ENCODE measurements at regions of chr6 and their contacts with region 1.

Region 1: GRCh38 chr6:159789377-159790148 is at the start of gene TCP1:
- DNase-seq: peak; percentile 100
- ATAC-seq: peak; percentile 90 to 94
- H3K4me3 ChIP-seq: peak within 1 kb of the TSS; percentile 94 to 99 (median 94)
- H3K27ac ChIP-seq: peak within 1 kb of the TSS; percentile 94 to 100 (median 96)
- H3K4me1 ChIP-seq: peaks cover 38 to 41% of the 10 kb centered on the region in 2 donors
- H3K27me3 ChIP-seq: no peaks in the 10 kb centered on the region
- CTCF ChIP-seq: no peak
- POLR2A ChIP-seq: peak; percentile 95 to 99
- total RNA-seq, gene TCP1: 135 to 256 (median 166) TPM

Region 2: DNA sequence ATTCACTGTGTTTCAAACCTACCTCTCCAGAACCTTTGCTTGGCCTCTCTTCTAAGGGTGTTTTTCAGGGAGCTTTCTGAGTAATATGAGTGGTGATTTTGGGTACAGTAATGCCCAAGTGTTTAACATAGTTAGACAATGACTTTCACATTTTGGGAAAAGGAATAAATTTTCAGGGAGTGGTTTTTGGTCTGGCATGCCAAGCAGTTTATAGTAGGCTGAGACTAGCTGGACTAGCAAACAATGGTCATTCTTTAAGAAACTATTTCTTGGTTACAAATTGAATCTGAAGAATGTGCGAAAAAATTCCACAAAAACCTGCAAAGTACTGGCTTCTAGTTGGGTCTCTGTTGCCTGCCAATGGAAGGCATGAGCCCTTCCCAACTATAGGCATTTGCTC is 605.0 kb before region 1 on chr6:
- in situ Hi-C with region 1: no loop called
- intact Hi-C with region 1: no loop called
- DNase-seq: no peak
- ATAC-seq: no peak
- H3K4me3 ChIP-seq: no peak overlapping the region
- H3K27ac ChIP-seq: no peak overlapping the region
- H3K4me1 ChIP-seq: no peaks in the 10 kb centered on the region
- H3K27me3 ChIP-seq: no peaks in the 10 kb centered on the region
- CTCF ChIP-seq: no peak
- POLR2A ChIP-seq: no peak

Region 3: DNA sequence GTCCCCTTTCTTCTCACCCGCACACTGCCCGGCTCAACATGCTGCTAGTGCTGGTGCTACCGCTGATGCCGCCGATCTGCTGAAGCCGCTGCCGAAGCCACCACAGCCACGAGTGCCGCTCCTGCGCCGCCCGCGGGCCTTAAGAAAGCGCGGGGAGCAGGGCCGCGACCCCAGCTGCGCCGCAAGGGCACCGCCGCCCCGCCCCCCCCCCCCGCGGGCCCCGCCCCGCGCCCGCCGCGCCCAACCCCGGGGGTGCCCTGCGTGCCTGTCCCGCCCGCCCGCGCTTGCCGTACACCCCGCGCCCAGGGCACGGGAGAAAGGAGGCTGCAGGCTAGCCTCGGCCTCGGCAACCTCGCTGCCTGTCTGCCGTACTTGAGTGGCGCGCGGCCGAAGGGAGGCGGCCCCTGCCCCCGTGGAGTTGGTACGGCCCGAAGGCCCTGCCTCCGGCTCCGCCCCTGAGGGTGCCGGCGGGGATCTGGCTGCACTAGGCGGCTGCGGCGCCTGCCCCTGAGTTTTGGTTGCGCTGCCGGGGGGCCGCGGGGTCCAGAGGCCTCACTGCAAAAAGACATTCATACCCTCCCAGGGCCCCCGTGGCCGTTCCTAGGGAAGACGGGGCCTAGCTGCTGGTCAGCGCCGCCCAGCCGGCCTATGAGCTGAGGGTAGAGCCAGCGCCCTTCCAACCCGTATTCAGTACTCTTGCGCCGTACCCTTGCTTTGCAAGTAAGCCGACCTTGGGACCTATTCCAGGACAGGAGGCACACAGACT is 96.3 kb before region 1 on chr6 and contains the start of gene SOD2:
- in situ Hi-C with region 1: loop called in 1 of 4 experiments (anchors 10 kb)
- intact Hi-C with region 1: loop called (anchors 1 kb)
- DNase-seq: peak; percentile 86 to 92
- ATAC-seq: peak; percentile 73 to 84
- H3K4me3 ChIP-seq: peak within 1 kb of the TSS; percentile 83 to 94 (median 90)
- H3K27ac ChIP-seq: peak within 1 kb of the TSS; percentile 94 to 99 (median 96)
- H3K4me1 ChIP-seq: peaks cover 38 to 41% of the 10 kb centered on the region in 2 donors
- H3K27me3 ChIP-seq: no peaks in the 10 kb centered on the region
- CTCF ChIP-seq: no peak
- POLR2A ChIP-seq: peak; percentile 88 to 95
- total RNA-seq, gene SOD2: 10,850 to 22,513 (median 13,452) TPM

Region 4: DNA sequence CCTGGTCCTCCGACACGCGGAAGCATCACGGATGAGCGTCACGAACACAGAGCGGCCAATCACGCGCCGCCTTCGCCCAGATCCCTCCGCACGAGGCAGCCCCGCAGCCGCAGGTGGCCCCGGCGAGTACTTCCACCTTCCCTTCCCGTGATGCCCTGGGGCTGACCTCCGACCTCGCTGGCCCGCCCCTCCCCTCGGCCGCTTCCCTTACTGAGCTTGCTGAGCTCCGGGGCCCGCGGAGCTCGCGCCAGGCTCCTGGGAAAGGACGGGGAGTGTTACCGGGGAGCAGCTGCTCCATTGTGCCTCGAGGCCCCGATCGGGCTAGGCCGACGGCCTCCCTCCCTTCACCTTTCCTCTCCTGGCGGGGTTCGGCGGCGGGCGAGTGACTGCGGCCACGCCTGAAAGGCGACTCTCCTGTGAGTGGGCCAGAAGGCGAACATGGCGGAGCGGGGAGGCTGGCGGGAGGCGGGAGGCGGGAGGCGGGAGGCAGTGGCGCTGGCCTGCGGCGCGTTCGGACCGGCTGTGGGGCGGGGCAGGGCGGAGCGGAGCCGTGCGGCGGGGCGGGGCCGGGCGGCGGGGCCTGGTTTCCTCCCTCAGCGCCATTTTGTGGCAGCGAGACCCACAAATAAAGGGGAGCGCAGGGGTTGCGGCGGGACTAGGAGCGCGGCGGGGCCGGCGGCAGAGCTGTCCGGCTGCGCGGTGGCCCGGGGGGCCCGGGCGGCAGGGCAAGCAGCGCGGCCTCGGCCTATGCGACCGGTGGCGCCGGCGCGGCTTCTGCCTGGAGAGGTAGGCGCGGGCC is 62.4 kb before region 1 on chr6 and contains the start of gene WTAP:
- in situ Hi-C with region 1: loop called in 1 of 4 experiments (anchors 5 kb)
- intact Hi-C with region 1: loop called (anchors 1 kb)
- DNase-seq: peak; percentile 97 to 98
- ATAC-seq: peak; percentile 82 to 88
- H3K4me3 ChIP-seq: peak within 1 kb of the TSS; percentile 86 to 99 (median 90)
- H3K27ac ChIP-seq: peak within 1 kb of the TSS; percentile 99 to 100 (median 99)
- H3K4me1 ChIP-seq: peaks cover 49 to 50% of the 10 kb centered on the region in 2 donors
- H3K27me3 ChIP-seq: no peaks in the 10 kb centered on the region
- CTCF ChIP-seq: peak in 1 of 5 experiments; percentile 40
- POLR2A ChIP-seq: peak; percentile 75 to 93
- total RNA-seq, gene WTAP: 147 to 238 (median 193) TPM

Region 5: GRCh38 chr6:159742165-159742564 is 47.4 kb before region 1 on chr6:
- in situ Hi-C with region 1: loop called in 1 of 4 experiments (anchors 5 kb)
- intact Hi-C with region 1: no loop called
- DNase-seq: no peak
- ATAC-seq: peak in 1 of 2 donors; percentile 36
- H3K4me3 ChIP-seq: no peak overlapping the region
- H3K27ac ChIP-seq: peak overlapping the region in 3 of 4 donors; percentile 7 to 42 (median 38)
- H3K4me1 ChIP-seq: peaks cover 0 to 13% of the 10 kb centered on the region in 2 donors
- H3K27me3 ChIP-seq: no peaks in the 10 kb centered on the region
- CTCF ChIP-seq: no peak
- POLR2A ChIP-seq: no peak

Region 6: DNA sequence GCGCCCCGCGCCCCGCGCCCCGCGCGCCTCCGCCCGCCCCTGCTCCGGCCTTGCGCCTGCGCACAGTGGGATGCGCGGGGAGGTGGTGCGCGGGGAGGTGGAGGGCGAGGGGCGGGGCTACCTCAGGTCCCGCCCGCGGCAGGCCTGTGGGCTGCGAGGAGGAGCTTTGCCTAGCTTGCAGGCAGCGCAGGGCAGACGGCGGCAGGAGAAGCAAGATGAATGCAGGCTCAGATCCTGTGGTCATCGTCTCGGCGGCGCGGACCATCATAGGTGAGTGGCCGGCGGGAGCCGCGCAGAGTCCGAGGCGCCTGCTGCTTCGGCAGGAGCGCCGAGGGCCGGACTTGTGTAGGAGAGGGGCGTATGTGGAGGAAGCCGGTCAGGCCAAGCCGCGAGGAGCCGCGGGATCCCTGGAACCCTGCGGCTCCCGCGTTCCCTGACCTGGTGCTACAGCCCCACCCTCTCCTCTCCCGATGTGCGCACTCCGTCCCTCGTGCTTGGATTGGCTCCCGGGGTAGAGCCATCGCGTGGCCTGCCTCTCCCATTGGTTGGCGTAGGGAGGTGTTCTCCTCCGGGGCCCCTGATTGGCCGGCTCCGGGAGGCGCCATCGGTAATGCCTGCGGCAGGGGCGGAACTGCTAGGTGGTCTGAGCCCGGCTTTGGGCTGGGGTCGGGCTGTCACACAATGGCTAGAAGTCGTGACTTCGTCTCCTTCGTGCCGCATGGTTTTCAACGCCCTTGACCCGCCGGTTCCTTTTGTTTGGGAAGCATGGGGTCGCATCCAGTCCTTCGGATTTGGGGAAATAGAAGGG is 27.5 kb before region 1 on chr6 and contains the start of gene ACAT2:
- in situ Hi-C with region 1: no loop called
- intact Hi-C with region 1: loop called (anchors 1 kb)
- DNase-seq: peak; percentile 95 to 96
- ATAC-seq: peak; percentile 98 to 99
- H3K4me3 ChIP-seq: peak within 1 kb of the TSS; percentile 84 to 90 (median 88)
- H3K27ac ChIP-seq: peak within 1 kb of the TSS; percentile 96 to 99 (median 96)
- H3K4me1 ChIP-seq: peaks cover 13 to 19% of the 10 kb centered on the region in 2 donors
- H3K27me3 ChIP-seq: no peaks in the 10 kb centered on the region
- CTCF ChIP-seq: peak in 2 of 5 experiments; percentile 8 to 40
- POLR2A ChIP-seq: peak; percentile 47 to 68
- total RNA-seq, gene ACAT2: 0.59 to 4.6 (median 2.4) TPM

Region 7: GRCh38 chr6:159968440-159969203 is 179.1 kb after region 1 on chr6 and contains the start of gene IGF2R:
- in situ Hi-C with region 1: no loop called
- intact Hi-C with region 1: loop called (anchors 5 kb)
- DNase-seq: peak; percentile 91 to 95
- ATAC-seq: peak; percentile 73 to 79
- H3K4me3 ChIP-seq: peak within 1 kb of the TSS; percentile 79 to 96 (median 90)
- H3K27ac ChIP-seq: peak within 1 kb of the TSS; percentile 95 to 98 (median 96)
- H3K4me1 ChIP-seq: peaks cover 42 to 43% of the 10 kb centered on the region in 2 donors
- H3K27me3 ChIP-seq: no peaks in the 10 kb centered on the region
- CTCF ChIP-seq: peak in 2 of 5 experiments; percentile 13 to 48
- POLR2A ChIP-seq: peak; percentile 94 to 95
- total RNA-seq, gene IGF2R: 56.6 to 134 (median 108) TPM

Region 8: GRCh38 chr6:160069050-160069454 is 279.5 kb after region 1 on chr6:
- in situ Hi-C with region 1: no loop called
- intact Hi-C with region 1: loop called (anchors 10 kb)
- DNase-seq: no peak
- ATAC-seq: no peak
- H3K4me3 ChIP-seq: no peak overlapping the region
- H3K27ac ChIP-seq: no peak overlapping the region
- H3K4me1 ChIP-seq: peaks cover 10 to 28% of the 10 kb centered on the region in 2 donors
- H3K27me3 ChIP-seq: no peaks in the 10 kb centered on the region
- CTCF ChIP-seq: no peak
- POLR2A ChIP-seq: no peak